ENCODE measurements at regions of chr1 and their contacts with region 1.

Region 1: GRCh38 chr1:206461602-206462455 is 8.4 kb upstream of the IKBKE start:
- DNase-seq: peak; percentile 62 to 72 (median 65)
- H3K4me3 ChIP-seq: no peak overlapping the region
- H3K4me3 Mint-ChIP-seq: no peak overlapping the region
- H3K27ac ChIP-seq: no peak overlapping the region
- H3K27ac Mint-ChIP-seq: peak overlapping the region in 4 of 7 donors; percentile 13 to 77 (median 16)
- H3K4me1 ChIP-seq: peaks cover 36% of the 10 kb centered on the region
- H3K4me1 Mint-ChIP-seq: peaks cover 21 to 49% (median 36%) of the 10 kb centered on the region in 4 donors
- H3K27me3 ChIP-seq: no peaks in the 10 kb centered on the region
- H3K27me3 Mint-ChIP-seq: no peaks in the 10 kb centered on the region

Region 2: GRCh38 chr1:206445116-206445515 is 16.7 kb before region 1 on chr1:
- CTCF ChIA-PET with region 1: interaction called, 11 read pairs
- POLR2A ChIA-PET with region 1: no interaction called
- intact Hi-C with region 1: no loop called
- DNase-seq: no peak
- H3K4me3 ChIP-seq: no peak overlapping the region
- H3K4me3 Mint-ChIP-seq: no peak overlapping the region
- H3K27ac ChIP-seq: no peak overlapping the region
- H3K27ac Mint-ChIP-seq: no peak overlapping the region
- H3K4me1 ChIP-seq: no peaks in the 10 kb centered on the region
- H3K4me1 Mint-ChIP-seq: no peaks in the 10 kb centered on the region
- H3K27me3 ChIP-seq: no peaks in the 10 kb centered on the region
- H3K27me3 Mint-ChIP-seq: no peaks in the 10 kb centered on the region

Region 3: DNA sequence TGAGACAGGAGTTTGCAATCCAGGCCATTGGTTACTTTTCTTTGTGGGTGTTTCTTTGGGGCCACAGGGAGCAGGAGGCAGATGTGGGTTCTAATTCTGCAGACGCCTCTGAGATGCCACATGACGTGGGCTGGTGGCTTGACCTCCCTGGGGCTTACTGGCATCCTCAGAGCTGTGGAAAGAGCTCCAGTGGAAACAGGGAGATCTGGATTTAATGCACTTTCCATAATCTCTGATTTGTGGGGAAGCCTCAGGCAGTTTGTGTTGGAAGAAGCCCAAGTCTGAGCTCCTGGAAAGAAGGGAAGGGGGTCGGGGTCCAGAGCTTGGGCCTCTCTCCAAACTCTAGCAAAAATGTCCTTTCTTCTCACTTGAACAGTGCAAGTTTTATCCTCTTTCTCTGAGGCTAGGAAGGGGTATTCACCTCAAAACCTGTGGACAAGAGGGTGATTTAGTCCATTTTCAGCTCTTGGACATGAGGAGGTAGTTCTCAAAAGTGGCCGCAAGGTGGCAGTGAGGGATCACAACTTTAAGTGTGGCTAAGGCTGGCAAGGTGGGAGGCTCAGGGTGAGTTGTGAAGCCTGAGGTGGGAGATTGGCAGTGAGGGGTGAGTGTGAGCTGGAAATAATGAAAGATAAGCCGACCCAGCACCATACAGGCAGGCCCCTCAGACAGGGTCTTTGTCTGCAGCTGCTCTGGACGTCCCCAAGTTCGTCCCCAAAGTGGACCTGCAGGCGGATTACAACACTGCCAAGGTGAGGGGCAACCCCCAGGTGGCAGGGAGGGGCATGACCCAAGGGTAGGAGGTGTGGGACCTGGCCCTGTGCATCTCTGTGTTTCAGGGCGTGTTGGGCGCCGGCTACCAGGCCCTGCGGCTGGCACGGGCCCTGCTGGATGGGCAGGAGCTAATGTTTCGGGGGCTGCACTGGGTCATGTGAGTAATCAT is 17.6 kb after region 1 on chr1:
- CTCF ChIA-PET with region 1: interaction called, 274 read pairs
- POLR2A ChIA-PET with region 1: interaction called, 5 read pairs
- intact Hi-C with region 1: loop called (anchors 1 kb)
- DNase-seq: peak; percentile 46 to 67 (median 52)
- H3K4me3 ChIP-seq: no peak overlapping the region
- H3K4me3 Mint-ChIP-seq: no peak overlapping the region
- H3K27ac ChIP-seq: no peak overlapping the region
- H3K27ac Mint-ChIP-seq: peak overlapping the region in 5 of 7 donors; percentile 8 to 80 (median 78)
- H3K4me1 ChIP-seq: peaks cover 21% of the 10 kb centered on the region
- H3K4me1 Mint-ChIP-seq: peaks cover 5 to 18% (median 12%) of the 10 kb centered on the region in 4 donors
- H3K27me3 ChIP-seq: no peaks in the 10 kb centered on the region
- H3K27me3 Mint-ChIP-seq: no peaks in the 10 kb centered on the region

Region 4: DNA sequence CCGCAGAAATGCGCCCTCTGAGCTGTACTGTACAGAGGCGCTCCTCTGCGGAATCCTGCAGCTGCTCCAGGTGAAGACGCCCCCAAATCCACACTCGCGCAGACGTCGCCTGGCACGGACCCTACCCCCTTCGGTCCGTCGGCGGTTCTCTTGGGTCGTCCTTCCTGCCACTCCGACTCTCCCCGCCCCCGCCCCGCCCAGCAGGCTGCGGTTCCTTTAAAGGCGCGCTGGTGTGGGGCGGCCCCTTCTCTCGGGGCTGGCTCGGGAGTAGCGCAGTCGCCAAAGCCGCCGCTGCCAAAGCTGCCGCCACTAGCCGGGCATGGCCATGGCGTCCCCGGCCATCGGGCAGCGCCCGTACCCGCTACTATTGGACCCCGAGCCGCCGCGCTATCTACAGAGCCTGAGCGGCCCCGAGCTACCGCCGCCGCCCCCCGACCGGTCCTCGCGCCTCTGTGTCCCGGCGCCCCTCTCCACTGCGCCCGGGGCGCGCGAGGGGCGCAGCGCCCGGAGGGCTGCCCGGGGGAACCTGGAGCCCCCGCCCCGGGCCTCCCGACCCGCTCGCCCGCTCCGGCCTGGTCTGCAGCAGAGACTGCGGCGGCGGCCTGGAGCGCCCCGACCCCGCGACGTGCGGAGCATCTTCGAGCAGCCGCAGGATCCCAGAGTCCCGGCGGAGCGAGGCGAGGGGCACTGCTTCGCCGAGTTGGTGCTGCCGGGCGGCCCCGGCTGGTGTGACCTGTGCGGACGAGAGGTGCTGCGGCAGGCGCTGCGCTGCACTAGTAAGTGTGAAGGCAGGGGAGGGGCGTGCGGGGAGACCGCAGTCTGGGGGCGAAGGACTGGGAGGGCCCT is 45.7 kb after region 1 on chr1 and contains the start of gene RASSF5:
- CTCF ChIA-PET with region 1: interaction called, 4 read pairs
- POLR2A ChIA-PET with region 1: interaction called, 5 read pairs
- intact Hi-C with region 1: loop called (anchors 2 kb)
- DNase-seq: peak; percentile 76 to 81 (median 78)
- H3K4me3 ChIP-seq: peak within 1 kb of the TSS; percentile 39 to 58
- H3K4me3 Mint-ChIP-seq: peak within 1 kb of the TSS; percentile 80 to 89 (median 82)
- H3K27ac ChIP-seq: no peak within 1 kb of the TSS
- H3K27ac Mint-ChIP-seq: peak within 1 kb of the TSS in 4 of 7 donors; percentile 54 to 67 (median 64)
- H3K4me1 ChIP-seq: peaks cover 45% of the 10 kb centered on the region
- H3K4me1 Mint-ChIP-seq: peaks cover 17 to 55% (median 34%) of the 10 kb centered on the region in 4 donors
- H3K27me3 ChIP-seq: peaks cover 4% of the 10 kb centered on the region
- H3K27me3 Mint-ChIP-seq: peaks cover 6 to 8% of the 10 kb centered on the region in 2 donors
- total RNA-seq, gene RASSF5: 186 to 190 TPM

Region 5: GRCh38 chr1:206517784-206518183 is 56.0 kb after region 1 on chr1:
- CTCF ChIA-PET with region 1: no interaction called
- POLR2A ChIA-PET with region 1: no interaction called
- intact Hi-C with region 1: no loop called
- DNase-seq: no peak
- H3K4me3 ChIP-seq: no peak overlapping the region
- H3K4me3 Mint-ChIP-seq: no peak overlapping the region
- H3K27ac ChIP-seq: no peak overlapping the region
- H3K27ac Mint-ChIP-seq: no peak overlapping the region
- H3K4me1 ChIP-seq: no peaks in the 10 kb centered on the region
- H3K4me1 Mint-ChIP-seq: no peaks in the 10 kb centered on the region
- H3K27me3 ChIP-seq: no peaks in the 10 kb centered on the region
- H3K27me3 Mint-ChIP-seq: no peaks in the 10 kb centered on the region